ENCODE measurements at regions of chr6 and their contacts with region 1.

Region 1: GRCh38 chr6:169933839-169934698 is 182.6 kb downstream of the ERMARD start:
- DNase-seq: no peak
- H3K4me3 ChIP-seq: no peak overlapping the region
- CTCF ChIP-seq: no peak

Region 2: GRCh38 chr6:169831450-169832246 is 102.4 kb before region 1 on chr6:
- in situ Hi-C with region 1: no loop called
- DNase-seq: peak; percentile 18
- H3K4me3 ChIP-seq: no peak overlapping the region
- CTCF ChIP-seq: peak; percentile 86

Region 3: GRCh38 chr6:169868458-169868857 is 65.6 kb before region 1 on chr6:
- in situ Hi-C with region 1: loop called (anchors 10 kb)
- DNase-seq: no peak
- H3K4me3 ChIP-seq: no peak overlapping the region
- CTCF ChIP-seq: no peak

Region 4: DNA sequence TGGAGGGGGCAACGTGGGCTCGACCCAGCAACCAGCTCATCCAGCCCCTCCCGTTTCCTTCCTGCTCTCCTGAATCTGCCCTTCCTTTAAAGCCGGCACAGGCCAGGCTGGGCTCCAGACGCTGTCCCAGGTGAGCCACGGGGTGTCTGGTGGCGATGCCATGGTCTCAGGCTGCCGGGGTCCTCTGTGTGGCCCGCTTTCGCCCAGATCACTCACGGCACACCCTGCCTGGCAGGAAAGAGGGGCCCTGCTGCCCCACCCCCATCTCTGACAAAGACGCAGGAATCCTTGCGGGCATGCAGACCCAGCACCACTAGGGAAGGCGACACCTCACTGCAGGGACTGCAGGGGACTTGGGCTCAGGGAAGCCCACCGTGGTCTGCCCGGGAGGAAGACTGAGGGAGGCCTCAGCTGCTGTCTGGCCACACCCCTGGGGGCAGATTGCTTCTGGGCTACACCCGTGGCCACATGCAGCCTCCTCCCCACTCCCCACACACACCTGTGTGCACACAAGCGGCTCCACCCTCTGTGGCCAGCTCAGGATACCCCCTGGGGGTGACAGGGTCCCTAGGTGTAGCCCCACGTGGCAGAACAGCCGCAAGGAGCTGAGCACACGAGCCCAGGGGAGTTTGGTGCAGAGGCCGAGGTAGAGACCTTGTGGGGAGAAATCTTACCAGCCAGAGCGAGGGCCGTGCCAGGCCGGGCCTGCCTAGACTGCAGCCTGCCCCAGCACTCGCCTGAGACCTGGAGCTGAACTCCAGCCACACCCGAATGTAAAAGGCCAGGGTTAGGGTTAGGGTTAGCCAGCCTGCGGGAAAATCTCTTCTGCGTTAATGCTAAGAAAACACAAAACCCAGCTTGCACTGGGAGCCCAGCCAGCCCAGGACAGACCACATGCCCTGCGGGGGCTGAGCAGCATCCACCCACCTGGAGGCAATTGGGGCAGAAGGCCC is 252.2 kb after region 1 on chr6:
- in situ Hi-C with region 1: no loop called
- DNase-seq: no peak
- H3K4me3 ChIP-seq: no peak overlapping the region
- CTCF ChIP-seq: no peak